Tibial artery (tissue), 4 donors: ENCODE measurements at regions of chr12 and their contacts with region 1.

Region 1: DNA sequence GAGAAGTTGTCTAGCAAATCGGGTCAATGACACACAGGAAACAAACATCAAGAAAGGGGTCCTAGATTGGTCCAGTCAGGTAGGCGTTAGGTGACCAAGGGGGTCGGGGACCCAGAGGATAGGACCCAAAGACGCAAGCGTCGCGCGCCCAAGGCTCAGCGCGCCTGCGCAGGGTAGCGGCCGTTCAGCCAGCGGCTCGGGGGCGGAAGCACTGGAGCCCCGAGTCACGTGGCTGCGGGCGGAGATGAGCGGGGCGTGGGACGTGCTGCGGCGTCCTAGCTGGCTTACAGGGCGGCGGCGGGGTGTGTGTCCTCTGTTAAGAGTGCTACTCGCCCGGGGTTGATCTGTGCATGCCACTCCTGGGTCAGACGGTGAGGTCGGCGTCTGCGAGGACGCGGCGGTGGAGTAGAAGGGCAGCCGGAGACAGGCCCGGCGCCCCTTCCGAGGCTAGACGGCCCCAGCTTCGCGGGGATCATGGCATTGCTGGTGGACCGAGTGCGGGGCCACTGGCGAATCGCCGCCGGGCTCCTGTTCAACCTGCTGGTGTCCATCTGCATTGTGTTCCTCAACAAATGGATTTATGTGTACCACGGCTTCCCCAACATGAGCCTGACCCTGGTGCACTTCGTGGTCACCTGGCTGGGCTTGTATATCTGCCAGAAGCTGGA is at the start of gene SLC35E3:
- DNase-seq: peak; percentile 92 to 95
- H3K4me3 ChIP-seq: peak within 1 kb of the TSS; percentile 74 to 79
- H3K27ac ChIP-seq: peak within 1 kb of the TSS; percentile 73 to 84
- H3K4me1 ChIP-seq: peaks cover 0 to 21% (median 11%) of the 10 kb centered on the region in 4 donors
- H3K27me3 ChIP-seq: no peaks in the 10 kb centered on the region
- CTCF ChIP-seq: no peak

Region 2: GRCh38 chr12:68807576-68808387 is 61.7 kb after region 1 on chr12 and contains the start of gene MDM2:
- intact Hi-C with region 1: loop called (anchors 5 kb)
- DNase-seq: peak; percentile 90 to 96
- H3K4me3 ChIP-seq: peak within 1 kb of the TSS; percentile 74 to 98
- H3K27ac ChIP-seq: peak within 1 kb of the TSS; percentile 95 to 100
- H3K4me1 ChIP-seq: peaks cover 0 to 40% (median 18%) of the 10 kb centered on the region in 4 donors
- H3K27me3 ChIP-seq: no peaks in the 10 kb centered on the region
- CTCF ChIP-seq: peak; percentile 80 to 93

Region 3: DNA sequence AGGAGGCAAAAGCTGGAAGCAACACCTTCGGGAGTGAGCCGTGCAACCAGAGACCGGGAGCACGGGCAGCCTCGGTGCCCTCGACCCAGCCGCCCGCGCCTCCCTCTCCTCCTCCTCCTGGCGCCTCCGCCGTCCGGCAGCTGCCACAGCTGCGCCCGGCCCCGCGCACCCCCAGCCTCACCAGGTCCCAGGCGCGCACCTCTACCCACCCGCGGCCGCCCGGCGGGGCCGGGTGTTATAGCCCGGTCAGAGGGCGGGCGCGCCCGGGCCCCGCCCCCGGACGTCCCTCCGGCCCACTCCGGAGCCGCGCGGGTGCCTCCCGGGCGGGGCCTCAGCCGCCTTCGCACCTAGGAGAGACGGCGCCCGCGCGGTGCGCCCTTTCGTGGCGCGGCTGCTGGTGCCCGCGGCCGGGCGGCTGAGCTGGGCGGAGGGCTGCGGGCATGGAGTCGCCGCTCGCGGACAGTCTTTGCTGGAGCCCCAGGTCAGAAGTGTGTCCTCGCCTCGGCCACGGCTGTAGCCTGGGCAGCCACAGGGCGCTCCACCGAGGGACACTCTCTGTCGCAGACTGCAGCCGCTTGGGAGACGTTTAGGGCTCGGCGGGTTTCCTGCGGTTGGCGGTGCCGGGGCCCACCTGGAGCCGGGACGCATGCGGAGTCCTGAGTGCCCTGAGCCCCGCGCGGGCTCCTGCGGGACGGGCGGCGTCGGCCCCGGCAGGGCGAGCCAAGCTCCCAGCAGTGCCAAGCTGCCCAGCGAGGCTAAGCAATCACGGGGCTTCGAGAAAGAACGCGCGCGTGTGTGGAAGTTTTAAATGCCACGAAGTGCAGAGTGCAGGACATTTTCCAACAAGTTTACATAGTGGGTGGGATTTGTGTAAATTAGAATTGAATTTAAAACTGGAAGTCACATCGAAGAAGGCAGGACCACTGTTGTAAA is 187.2 kb after region 1 on chr12 and contains the start of gene CPM:
- intact Hi-C with region 1: no loop called
- DNase-seq: peak; percentile 66 to 78
- H3K4me3 ChIP-seq: peak within 1 kb of the TSS; percentile 57 to 74
- H3K27ac ChIP-seq: peak within 1 kb of the TSS; percentile 46 to 47
- H3K4me1 ChIP-seq: peaks cover 0 to 19% (median 12%) of the 10 kb centered on the region in 4 donors
- H3K27me3 ChIP-seq: peaks cover 0 to 8% of the 10 kb centered on the region in 2 donors
- CTCF ChIP-seq: no peak